ENCODE measurements at regions of chr4 and their contacts with region 1.

Region 1: GRCh38 chr4:152937336-152938236 is 1.5 kb downstream of the FHDC1 start:
- DNase-seq: peak; percentile 21
- ATAC-seq: peak; percentile 59
- H3K4me3 ChIP-seq: peak overlapping the region; percentile 45
- H3K27ac ChIP-seq: no peak overlapping the region
- H3K4me1 ChIP-seq: no peaks in the 10 kb centered on the region; the same call in 1 of the 2 replicates
- H3K27me3 ChIP-seq: peaks cover 64% of the 10 kb centered on the region
- CTCF ChIP-seq: no peak
- POLR2A ChIP-seq: no peak
- RAD21 ChIP-seq: no peak

Region 2: GRCh38 chr4:152779513-152780266 is 157.9 kb before region 1 on chr4 and contains the starts of genes ARFIP1 and TIGD4:
- CTCF ChIA-PET with region 1: no interaction called
- POLR2A ChIA-PET with region 1: no interaction called
- dilution Hi-C with region 1: no loop called
- in situ Hi-C with region 1: no loop called
- intact Hi-C with region 1: loop called (anchors 5 kb)
- DNase-seq: peak; percentile 96
- ATAC-seq: peak; percentile 98
- H3K4me3 ChIP-seq: peak within 1 kb of the TSS; percentile 79
- H3K27ac ChIP-seq: peak within 1 kb of the TSS; percentile 70
- H3K4me1 ChIP-seq: no peaks in the 10 kb centered on the region
- H3K27me3 ChIP-seq: peaks cover 6% of the 10 kb centered on the region; the same call in 1 of the 2 replicates
- CTCF ChIP-seq: peak; percentile 12; the same call in 1 of the 2 replicates
- POLR2A ChIP-seq: peak; percentile 77
- RAD21 ChIP-seq: peak; percentile 21; the same call in 1 of the 2 replicates
- total RNA-seq, gene ARFIP1: 30.5 and 37.5 TPM in 2 replicates
- total RNA-seq, gene TIGD4: not detected in 2 replicates

Region 3: DNA sequence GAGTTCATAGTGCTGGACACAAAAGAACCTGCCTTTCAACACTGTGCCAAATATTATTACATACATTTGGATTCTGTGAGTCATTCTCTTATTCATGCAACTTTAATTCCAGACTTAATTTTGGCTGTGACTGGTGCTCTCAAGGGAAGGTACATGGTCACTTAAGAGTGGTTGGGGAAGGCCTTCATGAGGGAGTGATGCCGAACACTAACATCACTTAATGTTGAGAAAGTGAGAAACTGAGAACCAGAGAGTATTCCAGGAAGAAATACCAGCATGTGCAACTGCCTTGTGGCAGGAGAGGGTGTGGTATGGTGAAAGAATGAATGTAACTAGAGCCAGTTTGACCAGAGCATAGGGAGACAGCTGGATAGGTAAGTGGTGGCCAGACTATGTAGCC is 42.9 kb before region 1 on chr4:
- CTCF ChIA-PET with region 1: no interaction called
- POLR2A ChIA-PET with region 1: no interaction called
- dilution Hi-C with region 1: no loop called
- in situ Hi-C with region 1: no loop called
- intact Hi-C with region 1: loop called (anchors 5 kb)
- DNase-seq: peak; percentile 63
- ATAC-seq: peak; percentile 56
- H3K4me3 ChIP-seq: no peak overlapping the region
- H3K27ac ChIP-seq: no peak overlapping the region
- H3K4me1 ChIP-seq: peaks cover 5% of the 10 kb centered on the region; the same call in 1 of the 2 replicates
- H3K27me3 ChIP-seq: no peaks in the 10 kb centered on the region
- CTCF ChIP-seq: no peak
- POLR2A ChIP-seq: no peak
- RAD21 ChIP-seq: no peak

Region 4: DNA sequence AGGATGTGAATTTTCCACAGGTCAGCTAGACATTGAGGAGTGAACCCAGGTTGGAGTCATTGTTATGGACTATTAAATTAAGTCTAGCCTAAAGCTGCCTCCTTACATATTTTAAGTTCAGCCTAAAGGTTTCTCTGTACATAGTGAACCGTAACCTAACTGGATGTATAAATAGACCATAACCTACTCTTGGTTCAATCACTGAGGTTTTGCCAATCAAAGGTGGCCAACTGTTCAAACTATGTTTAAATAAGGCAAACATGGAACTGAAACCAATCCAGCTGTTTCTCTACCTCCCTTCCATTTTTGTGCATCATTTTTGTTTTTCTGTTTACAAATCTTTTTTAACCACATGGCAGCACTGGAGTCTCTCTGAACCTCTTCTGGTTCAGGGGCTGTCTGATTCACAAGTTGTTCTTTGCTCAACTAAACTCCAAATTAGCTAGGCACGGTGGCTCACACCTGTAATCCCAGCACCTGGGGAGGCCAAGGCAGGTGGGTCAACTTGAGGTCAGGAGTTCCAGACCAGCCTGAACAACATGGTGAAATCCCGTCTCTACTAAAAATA is 895.2 kb after region 1 on chr4:
- CTCF ChIA-PET with region 1: no interaction called
- POLR2A ChIA-PET with region 1: no interaction called
- dilution Hi-C with region 1: no loop called
- in situ Hi-C with region 1: no loop called
- intact Hi-C with region 1: no loop called
- DNase-seq: no peak
- ATAC-seq: no peak
- H3K4me3 ChIP-seq: no peak overlapping the region
- H3K27ac ChIP-seq: no peak overlapping the region
- H3K4me1 ChIP-seq: no peaks in the 10 kb centered on the region
- H3K27me3 ChIP-seq: no peaks in the 10 kb centered on the region
- CTCF ChIP-seq: no peak
- POLR2A ChIP-seq: no peak
- RAD21 ChIP-seq: no peak

Measured in IMR-90 (cell line).